ENCODE measurements at regions of chr1 and their contacts with region 1.

Region 1: GRCh38 chr1:25695090-25695770 is 78.6 kb downstream of the MAN1C1 start:
- DNase-seq: peak; percentile 44 to 94
- H3K4me3 ChIP-seq: peak overlapping the region in 1 of 2 donors; percentile 7
- H3K27ac ChIP-seq: peak overlapping the region; percentile 81 to 83
- H3K4me1 ChIP-seq: peaks cover 10 to 43% of the 10 kb centered on the region in 2 donors
- H3K27me3 ChIP-seq: no peaks in the 10 kb centered on the region
- CTCF ChIP-seq: peak in 2 of 3 experiments; percentile 7 to 18

Region 2: GRCh38 chr1:25616095-25616986 is 78.9 kb before region 1 on chr1 and contains the start of gene MAN1C1:
- intact Hi-C with region 1: loop called (anchors 1 kb)
- DNase-seq: peak; percentile 47 to 93
- H3K4me3 ChIP-seq: peak within 1 kb of the TSS; percentile 93 to 99
- H3K27ac ChIP-seq: peak within 1 kb of the TSS; percentile 83
- H3K4me1 ChIP-seq: peaks cover 14 to 19% of the 10 kb centered on the region in 2 donors
- H3K27me3 ChIP-seq: no peaks in the 10 kb centered on the region
- CTCF ChIP-seq: peak; percentile 51 to 62 (median 53)
- total RNA-seq, gene MAN1C1: 14.3 TPM

Region 3: GRCh38 chr1:25658791-25659431 is 36.3 kb before region 1 on chr1:
- intact Hi-C with region 1: loop called (anchors 5 kb)
- DNase-seq: peak in 1 of 2 donors; percentile 83
- H3K4me3 ChIP-seq: no peak overlapping the region
- H3K27ac ChIP-seq: peak overlapping the region in 1 of 2 donors; percentile 24
- H3K4me1 ChIP-seq: peaks cover 4 to 11% of the 10 kb centered on the region in 2 donors
- H3K27me3 ChIP-seq: no peaks in the 10 kb centered on the region
- CTCF ChIP-seq: no peak

Region 4: GRCh38 chr1:25711555-25712298 is 16.5 kb after region 1 on chr1:
- intact Hi-C with region 1: no loop called
- DNase-seq: no peak
- H3K4me3 ChIP-seq: no peak overlapping the region
- H3K27ac ChIP-seq: no peak overlapping the region
- H3K4me1 ChIP-seq: no peaks in the 10 kb centered on the region
- H3K27me3 ChIP-seq: no peaks in the 10 kb centered on the region
- CTCF ChIP-seq: no peak

Region 5: GRCh38 chr1:25743826-25744581 is 48.8 kb after region 1 on chr1:
- intact Hi-C with region 1: loop called (anchors 1 kb)
- DNase-seq: peak; percentile 25 to 83
- H3K4me3 ChIP-seq: peak overlapping the region in 1 of 2 donors; percentile 23
- H3K27ac ChIP-seq: peak overlapping the region; percentile 85 to 93
- H3K4me1 ChIP-seq: peaks cover 11 to 26% of the 10 kb centered on the region in 2 donors
- H3K27me3 ChIP-seq: no peaks in the 10 kb centered on the region
- CTCF ChIP-seq: peak; percentile 32 to 55 (median 36)

Measured in ascending aorta (tissue), 2 donors.